Activated CD4-positive, alpha-beta memory T cell treated with anti-CD3 and anti-CD28 coated beads for 36 hours (primary cell): ENCODE measurements at regions of chr13 and their contacts with region 1.

Region 1: GRCh38 chr13:40221460-40222201 is 444.8 kb downstream of the FOXO1 start:
- DNase-seq: peak; percentile 54
- H3K4me3 Mint-ChIP-seq: peak overlapping the region; percentile 30
- H3K27ac Mint-ChIP-seq: peak overlapping the region; percentile 74
- H3K4me1 Mint-ChIP-seq: peaks cover 63% of the 10 kb centered on the region
- H3K27me3 Mint-ChIP-seq: no peaks in the 10 kb centered on the region

Region 2: DNA sequence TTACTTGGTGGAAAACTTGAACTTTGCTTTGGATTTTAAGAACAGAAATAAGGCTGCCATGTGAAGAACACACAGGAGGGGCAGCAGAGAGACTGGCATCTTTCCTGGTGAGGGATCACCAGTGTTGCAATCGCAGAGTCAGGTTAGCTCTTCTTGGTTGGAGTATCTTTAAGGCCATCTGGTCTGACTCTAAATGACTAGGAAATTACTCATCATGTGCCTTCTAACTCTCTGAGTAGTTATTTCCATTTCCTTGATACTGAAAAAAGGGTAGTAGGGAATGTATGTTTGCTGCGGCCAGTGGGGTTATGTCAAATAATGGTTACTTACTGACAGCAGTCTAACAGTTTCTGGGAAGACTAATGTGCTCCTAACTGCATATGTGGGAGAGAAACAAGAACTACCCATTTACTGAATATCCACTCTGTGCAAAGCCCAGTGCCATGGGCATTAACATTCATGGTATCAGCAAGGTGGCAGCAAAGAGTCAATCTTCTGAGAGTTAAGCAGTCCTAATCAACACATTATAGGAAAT is 444.0 kb before region 1 on chr13:
- CTCF ChIA-PET with region 1: no interaction called
- POLR2A ChIA-PET with region 1: no interaction called
- intact Hi-C with region 1: loop called (anchors 2 kb)
- DNase-seq: peak; percentile 72
- H3K4me3 Mint-ChIP-seq: peak overlapping the region; percentile 4
- H3K27ac Mint-ChIP-seq: peak overlapping the region; percentile 92
- H3K4me1 Mint-ChIP-seq: peaks cover 52% of the 10 kb centered on the region
- H3K27me3 Mint-ChIP-seq: no peaks in the 10 kb centered on the region

Region 3: DNA sequence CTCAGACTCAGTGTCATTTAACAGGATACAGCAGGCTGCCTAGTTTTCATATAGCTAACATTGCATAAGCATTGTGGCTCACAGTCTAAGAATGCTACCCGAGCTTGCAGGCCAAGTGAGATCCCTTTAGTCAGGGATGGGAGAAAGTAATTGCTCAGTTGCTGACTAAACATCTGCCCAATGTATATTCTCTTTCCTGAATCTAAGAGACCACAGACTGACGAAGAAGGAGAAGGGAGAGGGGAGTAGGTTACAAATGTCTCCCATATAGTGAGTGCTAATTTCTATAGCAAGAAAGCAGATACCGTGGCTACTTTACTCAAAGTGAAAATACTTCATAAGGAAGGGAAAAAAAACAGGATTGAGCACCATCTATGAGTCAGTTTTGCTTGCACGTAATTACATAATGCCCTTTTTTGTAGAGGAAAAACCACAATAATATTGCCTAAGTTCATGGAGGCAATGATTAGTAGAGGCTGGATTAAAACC is 112.2 kb before region 1 on chr13:
- CTCF ChIA-PET with region 1: interaction called, 3 read pairs
- POLR2A ChIA-PET with region 1: interaction called, 5 read pairs
- intact Hi-C with region 1: loop called (anchors 1 kb)
- DNase-seq: peak; percentile 51
- H3K4me3 Mint-ChIP-seq: no peak overlapping the region
- H3K27ac Mint-ChIP-seq: peak overlapping the region; percentile 18
- H3K4me1 Mint-ChIP-seq: peaks cover 33% of the 10 kb centered on the region
- H3K27me3 Mint-ChIP-seq: no peaks in the 10 kb centered on the region

Region 4: GRCh38 chr13:40206241-40207000 is 15.2 kb before region 1 on chr13:
- CTCF ChIA-PET with region 1: interaction called, 8 read pairs
- POLR2A ChIA-PET with region 1: interaction called, 14 read pairs
- intact Hi-C with region 1: loop called (anchors 1 kb)
- DNase-seq: peak; percentile 68
- H3K4me3 Mint-ChIP-seq: peak overlapping the region; percentile 60
- H3K27ac Mint-ChIP-seq: peak overlapping the region; percentile 99
- H3K4me1 Mint-ChIP-seq: peaks cover 52% of the 10 kb centered on the region
- H3K27me3 Mint-ChIP-seq: no peaks in the 10 kb centered on the region

Region 5: DNA sequence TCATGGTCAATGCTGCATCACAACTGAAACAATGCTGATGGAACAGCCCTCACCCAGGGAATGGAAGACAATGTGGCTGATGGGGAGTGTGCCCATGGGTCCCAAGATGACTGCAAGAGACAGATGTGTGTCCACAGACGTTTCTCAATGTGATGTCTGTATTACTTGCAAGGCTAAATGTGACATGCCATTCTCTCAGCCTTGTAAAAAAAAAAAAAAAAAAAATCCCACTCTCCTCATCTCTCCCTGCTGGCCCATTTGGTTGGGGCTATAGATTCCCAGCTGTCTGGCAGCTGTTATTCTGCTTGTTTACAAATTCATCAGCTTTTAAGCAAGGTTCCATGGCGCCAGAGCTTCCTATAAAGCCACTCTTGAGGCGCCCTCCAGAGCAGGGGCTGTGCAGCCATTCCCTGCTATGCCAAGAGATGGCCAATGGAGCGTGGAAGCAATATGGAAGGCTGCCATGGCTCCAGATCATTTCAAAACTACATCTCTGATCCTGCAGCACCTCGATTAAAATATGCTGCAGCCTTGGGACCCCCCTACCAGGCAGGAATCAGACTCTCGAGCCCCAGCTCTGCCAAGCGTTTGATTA is 150.0 kb after region 1 on chr13:
- CTCF ChIA-PET with region 1: no interaction called
- POLR2A ChIA-PET with region 1: no interaction called
- intact Hi-C with region 1: loop called (anchors 5 kb)
- DNase-seq: no peak
- H3K4me3 Mint-ChIP-seq: no peak overlapping the region
- H3K27ac Mint-ChIP-seq: no peak overlapping the region
- H3K4me1 Mint-ChIP-seq: peaks cover 34% of the 10 kb centered on the region
- H3K27me3 Mint-ChIP-seq: peaks cover 1% of the 10 kb centered on the region

Region 6: DNA sequence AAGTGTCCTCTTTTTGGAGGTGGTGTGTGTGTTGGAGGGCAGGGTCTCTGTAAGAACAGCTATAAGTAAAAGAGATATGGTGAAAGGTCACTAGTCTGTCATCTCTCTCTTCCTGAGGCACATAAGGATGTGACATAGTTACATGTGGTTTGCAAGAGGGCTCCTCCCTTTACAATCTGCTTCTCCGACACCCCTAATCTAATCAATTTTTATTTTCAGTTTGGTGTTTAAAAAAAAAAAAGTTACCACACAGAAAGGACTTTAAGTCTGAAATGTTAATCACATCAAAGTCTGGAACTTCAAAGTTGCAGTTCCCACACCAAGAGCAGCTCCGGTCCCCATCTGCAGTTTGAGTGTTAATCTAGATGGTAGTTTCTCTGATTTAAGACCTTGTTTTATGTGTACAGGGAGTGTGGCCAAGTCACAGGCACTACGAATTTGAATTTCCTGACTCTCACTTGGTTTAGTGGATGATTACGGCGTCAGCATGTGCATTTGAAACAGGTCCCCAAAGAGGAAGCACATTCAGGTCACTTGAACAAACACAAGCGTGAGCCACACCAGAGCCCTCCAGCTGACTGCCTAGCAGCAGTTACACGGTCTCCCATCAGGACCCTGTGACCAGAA is 391.7 kb after region 1 on chr13:
- CTCF ChIA-PET with region 1: no interaction called
- POLR2A ChIA-PET with region 1: interaction called, 4 read pairs
- intact Hi-C with region 1: loop called (anchors 5 kb)
- DNase-seq: peak; percentile 77
- H3K4me3 Mint-ChIP-seq: peak overlapping the region; percentile 74
- H3K27ac Mint-ChIP-seq: peak overlapping the region; percentile 97
- H3K4me1 Mint-ChIP-seq: peaks cover 92% of the 10 kb centered on the region
- H3K27me3 Mint-ChIP-seq: no peaks in the 10 kb centered on the region